Activated CD4-positive, alpha-beta T cell treated with anti-CD3 and anti-CD28 coated beads for 36 hours (primary cell): ENCODE measurements at regions of chr15 and their contacts with region 1.

Region 1: DNA sequence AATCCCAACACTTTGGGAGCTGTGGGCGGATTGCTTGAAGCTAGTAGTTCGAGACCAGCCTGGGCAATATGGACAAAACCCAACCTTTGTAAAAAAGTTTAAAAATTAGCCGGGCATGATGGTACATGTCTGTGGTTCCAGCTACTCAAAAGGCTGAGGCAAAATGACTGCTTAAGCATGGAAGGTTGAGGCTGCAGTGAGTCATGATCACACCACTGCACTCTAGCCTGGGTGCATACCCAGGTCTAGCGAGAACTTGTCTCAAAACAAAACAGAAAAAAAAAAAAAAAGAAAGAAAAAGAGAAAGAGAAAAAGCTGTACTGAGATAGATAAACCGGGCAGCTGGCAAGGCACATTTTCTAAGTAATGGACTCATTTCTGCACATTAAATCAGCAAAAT is 10.6 kb downstream of the ARPP19 start:
- DNase-seq: peak; percentile 83
- ATAC-seq: peak; percentile 82
- H3K4me3 Mint-ChIP-seq: peak overlapping the region; percentile 63
- H3K27ac Mint-ChIP-seq: peak overlapping the region; percentile 96
- H3K4me1 Mint-ChIP-seq: peaks cover 66% of the 10 kb centered on the region
- H3K27me3 Mint-ChIP-seq: no peaks in the 10 kb centered on the region

Region 2: GRCh38 chr15:52261498-52262242 is 296.5 kb before region 1 on chr15:
- CTCF ChIA-PET with region 1: interaction called, 4 read pairs
- POLR2A ChIA-PET with region 1: no interaction called
- intact Hi-C with region 1: loop called (anchors 2 to 5 kb)
- DNase-seq: peak; percentile 83
- ATAC-seq: peak; percentile 100
- H3K4me3 Mint-ChIP-seq: no peak overlapping the region
- H3K27ac Mint-ChIP-seq: peak overlapping the region; percentile 84
- H3K4me1 Mint-ChIP-seq: peaks cover 31% of the 10 kb centered on the region
- H3K27me3 Mint-ChIP-seq: no peaks in the 10 kb centered on the region

Region 3: GRCh38 chr15:52466134-52466701 is 92.0 kb before region 1 on chr15:
- CTCF ChIA-PET with region 1: interaction called, 4 read pairs
- POLR2A ChIA-PET with region 1: interaction called, 3 read pairs
- intact Hi-C with region 1: loop called (anchors 1 to 5 kb)
- DNase-seq: peak; percentile 71
- ATAC-seq: peak; percentile 80
- H3K4me3 Mint-ChIP-seq: no peak overlapping the region
- H3K27ac Mint-ChIP-seq: peak overlapping the region; percentile 20
- H3K4me1 Mint-ChIP-seq: peaks cover 43% of the 10 kb centered on the region
- H3K27me3 Mint-ChIP-seq: no peaks in the 10 kb centered on the region

Region 4: GRCh38 chr15:52528991-52529926 is 28.9 kb before region 1 on chr15:
- CTCF ChIA-PET with region 1: interaction called, 6 read pairs
- POLR2A ChIA-PET with region 1: interaction called, 3 read pairs
- intact Hi-C with region 1: loop called (anchors 1 kb)
- DNase-seq: peak; percentile 89
- ATAC-seq: peak; percentile 89
- H3K4me3 Mint-ChIP-seq: peak overlapping the region; percentile 73
- H3K27ac Mint-ChIP-seq: peak overlapping the region; percentile 87
- H3K4me1 Mint-ChIP-seq: peaks cover 23% of the 10 kb centered on the region
- H3K27me3 Mint-ChIP-seq: peaks cover 10% of the 10 kb centered on the region

Region 5: GRCh38 chr15:52658955-52659354 is 100.8 kb after region 1 on chr15:
- CTCF ChIA-PET with region 1: interaction called, 3 read pairs
- POLR2A ChIA-PET with region 1: interaction called, 4 read pairs
- intact Hi-C with region 1: loop called in 1 of 2 experiments (anchors 5 kb)
- DNase-seq: peak; percentile 61
- ATAC-seq: peak; percentile 94
- H3K4me3 Mint-ChIP-seq: peak overlapping the region; percentile 28
- H3K27ac Mint-ChIP-seq: peak overlapping the region; percentile 34
- H3K4me1 Mint-ChIP-seq: peaks cover 26% of the 10 kb centered on the region
- H3K27me3 Mint-ChIP-seq: no peaks in the 10 kb centered on the region